ENCODE measurements at regions of chr19 and their contacts with region 1.

Region 1: DNA sequence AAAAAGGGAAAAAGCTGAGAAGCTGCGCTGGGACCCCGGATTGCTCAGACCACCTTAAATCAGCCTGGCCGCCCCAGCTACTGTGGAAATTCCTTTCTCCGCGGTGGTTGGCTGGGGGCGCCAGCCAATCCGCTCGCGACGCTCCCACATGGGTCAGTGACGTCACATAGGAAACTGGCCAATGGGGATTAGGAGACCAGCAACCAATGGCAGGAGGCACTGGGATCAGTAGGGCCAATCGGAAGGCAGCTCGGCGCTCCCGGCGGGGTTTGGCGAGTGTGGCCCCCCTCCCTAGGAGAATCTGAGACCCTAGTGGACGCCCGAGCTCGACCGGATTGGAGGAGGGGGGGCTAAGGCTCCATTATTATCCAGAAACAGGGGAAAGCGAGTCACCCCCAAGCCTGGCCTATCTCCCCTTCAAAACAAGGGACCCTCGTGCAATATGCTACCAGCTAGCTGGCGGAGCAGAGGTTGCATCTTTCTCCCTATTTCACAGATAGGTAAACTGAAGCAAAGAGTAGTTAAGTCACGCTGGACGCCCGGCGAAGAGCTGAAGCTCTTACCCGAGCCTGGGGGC is 6.5 kb upstream of the TLE2 start:
- DNase-seq: peak; percentile 94 to 97 (median 95)
- H3K4me3 ChIP-seq: peak overlapping the region; percentile 77 to 93
- H3K4me3 Mint-ChIP-seq: peak overlapping the region; percentile 90 to 96 (median 93)
- H3K27ac ChIP-seq: peak overlapping the region; percentile 75
- H3K27ac Mint-ChIP-seq: peak overlapping the region; percentile 95 to 99 (median 98)
- H3K4me1 ChIP-seq: peaks cover 19% of the 10 kb centered on the region
- H3K4me1 Mint-ChIP-seq: peaks cover 18 to 42% (median 28%) of the 10 kb centered on the region in 4 donors
- H3K27me3 ChIP-seq: no peaks in the 10 kb centered on the region
- H3K27me3 Mint-ChIP-seq: peaks cover 0 to 3% of the 10 kb centered on the region in 2 donors

Region 2: GRCh38 chr19:2702162-2703076 is 333.2 kb before region 1 on chr19 and contains the start of gene GNG7:
- CTCF ChIA-PET with region 1: no interaction called
- POLR2A ChIA-PET with region 1: no interaction called
- intact Hi-C with region 1: no loop called
- DNase-seq: peak; percentile 90 to 95 (median 95)
- H3K4me3 ChIP-seq: peak within 1 kb of the TSS in 1 of 2 donors; percentile 45
- H3K4me3 Mint-ChIP-seq: peak within 1 kb of the TSS; percentile 70 to 80 (median 76)
- H3K27ac ChIP-seq: peak within 1 kb of the TSS; percentile 26
- H3K27ac Mint-ChIP-seq: peak within 1 kb of the TSS; percentile 55 to 89 (median 67)
- H3K4me1 ChIP-seq: peaks cover 5% of the 10 kb centered on the region
- H3K4me1 Mint-ChIP-seq: peaks cover 20 to 38% (median 27%) of the 10 kb centered on the region in 4 donors
- H3K27me3 ChIP-seq: no peaks in the 10 kb centered on the region
- H3K27me3 Mint-ChIP-seq: no peaks in the 10 kb centered on the region
- total RNA-seq, gene GNG7: 4.1 to 4.2 TPM

Region 3: GRCh38 chr19:2820112-2820702 is 215.4 kb before region 1 on chr19:
- CTCF ChIA-PET with region 1: no interaction called
- POLR2A ChIA-PET with region 1: no interaction called
- intact Hi-C with region 1: loop called (anchors 10 kb)
- DNase-seq: no peak
- H3K4me3 ChIP-seq: peak overlapping the region; percentile 51 to 69
- H3K4me3 Mint-ChIP-seq: peak overlapping the region; percentile 76 to 87 (median 84)
- H3K27ac ChIP-seq: peak overlapping the region; percentile 33
- H3K27ac Mint-ChIP-seq: peak overlapping the region in 1 of 7 donors; percentile 70
- H3K4me1 ChIP-seq: peaks cover 8% of the 10 kb centered on the region
- H3K4me1 Mint-ChIP-seq: peaks cover 4 to 18% (median 4%) of the 10 kb centered on the region in 4 donors
- H3K27me3 ChIP-seq: no peaks in the 10 kb centered on the region
- H3K27me3 Mint-ChIP-seq: no peaks in the 10 kb centered on the region

Region 4: GRCh38 chr19:2977001-2977685 is 58.5 kb before region 1 on chr19 and contains the start of gene TLE6:
- CTCF ChIA-PET with region 1: no interaction called
- POLR2A ChIA-PET with region 1: interaction called, 24 read pairs
- intact Hi-C with region 1: loop called (anchors 1 kb)
- DNase-seq: peak; percentile 92 to 94 (median 93)
- H3K4me3 ChIP-seq: peak within 1 kb of the TSS; percentile 54 to 90
- H3K4me3 Mint-ChIP-seq: peak within 1 kb of the TSS; percentile 90 to 99 (median 94)
- H3K27ac ChIP-seq: peak within 1 kb of the TSS; percentile 17
- H3K27ac Mint-ChIP-seq: peak within 1 kb of the TSS; percentile 68 to 97 (median 90)
- H3K4me1 ChIP-seq: peaks cover 13% of the 10 kb centered on the region
- H3K4me1 Mint-ChIP-seq: peaks cover 6 to 19% (median 14%) of the 10 kb centered on the region in 4 donors
- H3K27me3 ChIP-seq: no peaks in the 10 kb centered on the region
- H3K27me3 Mint-ChIP-seq: peaks cover 0 to 6% of the 10 kb centered on the region in 2 donors
- total RNA-seq, gene TLE6: not detected

Region 5: DNA sequence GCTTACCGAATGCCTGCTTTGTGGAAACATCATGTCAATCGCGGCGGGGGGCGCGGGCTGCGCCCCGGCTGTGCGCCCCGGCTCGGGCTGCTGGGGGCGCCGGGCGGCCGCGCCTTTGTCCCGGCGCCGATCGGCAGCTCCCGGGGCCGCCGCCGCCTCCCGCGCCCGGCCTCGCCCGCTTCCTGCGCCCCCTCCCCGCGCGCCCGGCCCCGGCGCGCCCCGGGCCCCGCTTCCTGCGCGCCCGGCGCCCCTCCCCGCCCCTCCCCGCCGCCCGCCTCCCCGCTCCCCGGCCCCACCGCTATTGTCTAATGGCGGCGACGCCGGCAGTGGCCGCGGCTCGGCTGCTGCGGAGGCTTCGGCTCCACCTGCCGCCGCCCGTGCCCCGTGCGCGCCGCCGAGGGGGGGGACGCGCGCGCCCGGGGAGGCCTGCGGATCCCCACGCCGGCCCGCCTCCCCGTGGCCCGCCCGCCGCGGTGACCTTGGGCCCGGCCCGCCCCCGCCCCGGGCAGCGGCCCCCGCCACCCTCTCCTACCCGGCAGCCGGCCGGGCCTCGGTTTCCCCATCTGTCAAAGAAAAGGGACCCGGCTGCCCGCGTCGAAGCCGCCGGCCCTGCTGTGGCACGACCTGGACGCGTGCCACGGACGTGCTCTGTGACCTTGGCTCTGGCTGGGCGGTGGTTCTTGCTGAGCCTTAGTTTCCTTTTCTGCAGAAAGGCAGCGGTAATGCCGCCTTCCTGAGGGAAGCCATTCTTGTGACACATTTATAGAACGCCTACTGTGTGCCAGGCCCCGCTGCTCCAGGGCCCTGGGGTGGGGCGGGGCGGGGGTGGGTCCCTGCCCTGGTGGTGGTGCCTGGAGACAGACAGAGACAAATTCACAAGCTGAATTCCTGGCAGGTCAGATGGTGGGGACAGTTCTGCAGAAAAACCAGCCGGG is 26.8 kb after region 1 on chr19 and contains the start of gene TLE5:
- CTCF ChIA-PET with region 1: interaction called, 16 read pairs
- POLR2A ChIA-PET with region 1: interaction called, 555 read pairs
- intact Hi-C with region 1: loop called (anchors 1 kb)
- DNase-seq: peak; percentile 77 to 82 (median 79)
- H3K4me3 ChIP-seq: peak within 1 kb of the TSS in 1 of 2 donors; percentile 65
- H3K4me3 Mint-ChIP-seq: peak within 1 kb of the TSS; percentile 87 to 95 (median 90)
- H3K27ac ChIP-seq: peak within 1 kb of the TSS; percentile 62
- H3K27ac Mint-ChIP-seq: peak within 1 kb of the TSS; percentile 93 to 97 (median 96)
- H3K4me1 ChIP-seq: peaks cover 55% of the 10 kb centered on the region
- H3K4me1 Mint-ChIP-seq: peaks cover 16 to 51% (median 35%) of the 10 kb centered on the region in 4 donors
- H3K27me3 ChIP-seq: no peaks in the 10 kb centered on the region
- H3K27me3 Mint-ChIP-seq: no peaks in the 10 kb centered on the region
- total RNA-seq, gene TLE5: 876 to 900 TPM

Region 6: DNA sequence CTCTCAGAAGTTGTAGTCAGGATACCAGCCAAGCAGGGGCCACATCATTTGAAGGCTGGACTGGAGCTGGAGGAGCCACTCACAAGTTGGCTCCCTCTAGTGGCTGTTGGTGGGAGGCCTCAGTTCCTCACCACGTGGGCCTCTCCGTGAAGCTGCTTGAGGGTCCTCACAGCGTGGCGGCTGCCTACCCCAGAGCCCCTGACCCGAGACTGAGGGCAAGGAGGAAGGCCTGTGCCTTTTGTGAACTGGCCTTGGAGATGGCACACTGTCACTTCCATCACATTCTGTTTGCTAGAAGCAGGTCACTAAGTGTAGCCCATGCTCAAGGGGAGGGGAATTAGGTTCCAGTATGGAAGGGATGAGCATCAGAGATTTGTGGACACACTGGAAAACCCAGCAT is 73.1 kb after region 1 on chr19:
- CTCF ChIA-PET with region 1: interaction called, 14 read pairs
- POLR2A ChIA-PET with region 1: interaction called, 12 read pairs
- intact Hi-C with region 1: loop called (anchors 5 kb)
- DNase-seq: peak; percentile 60 to 74 (median 66)
- H3K4me3 ChIP-seq: no peak overlapping the region
- H3K4me3 Mint-ChIP-seq: peak overlapping the region in 2 of 8 donors; percentile 1 to 54
- H3K27ac ChIP-seq: no peak overlapping the region
- H3K27ac Mint-ChIP-seq: peak overlapping the region in 1 of 7 donors; percentile 72
- H3K4me1 ChIP-seq: peaks cover 12% of the 10 kb centered on the region
- H3K4me1 Mint-ChIP-seq: peaks cover 5 to 11% (median 10%) of the 10 kb centered on the region in 4 donors
- H3K27me3 ChIP-seq: no peaks in the 10 kb centered on the region
- H3K27me3 Mint-ChIP-seq: peaks cover 0 to 2% of the 10 kb centered on the region in 2 donors

Measured in CD4-positive, alpha-beta memory T cell (primary cell).